ENCODE measurements at regions of chr22 and their contacts with region 1.

Region 1: DNA sequence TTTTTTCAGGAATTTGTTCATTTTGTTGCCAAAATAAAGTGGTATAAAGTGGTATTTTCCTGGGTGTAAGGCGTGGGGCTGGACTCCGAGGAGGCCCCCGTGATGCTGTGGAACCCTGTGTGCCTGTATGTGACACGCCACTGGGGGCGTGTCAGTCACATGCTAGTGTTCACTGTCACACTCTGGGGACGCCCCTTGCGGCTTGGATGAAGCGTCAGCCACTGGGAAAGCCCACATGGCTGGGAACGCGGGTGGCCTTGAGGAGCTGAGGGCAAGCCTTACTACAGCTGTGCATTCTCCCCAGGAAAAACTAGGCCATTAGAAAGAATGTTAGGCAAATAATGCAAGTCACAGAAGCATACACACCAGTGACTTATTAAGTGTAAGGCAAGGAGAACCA is 77.0 kb upstream of the SLC25A18 start:
- DNase-seq: peak in 6 of 10 donors; percentile 17 to 66 (median 42)
- H3K4me3 ChIP-seq: no peak overlapping the region
- H3K27ac ChIP-seq: peak overlapping the region in 14 of 59 donors; percentile 0 to 69 (median 50)
- H3K27me3 ChIP-seq: no peaks in the 10 kb centered on the region
- CTCF ChIP-seq: peak in 18 of 56 donors; percentile 8 to 56 (median 28)

Region 2: GRCh38 chr22:17422736-17423343 is 63.5 kb before region 1 on chr22:
- intact Hi-C with region 1: loop called in 1 of 2 experiments (anchors 5 kb)
- DNase-seq: no peak
- H3K4me3 ChIP-seq: no peak overlapping the region
- H3K27ac ChIP-seq: peak overlapping the region in 1 of 59 donors; percentile 60
- H3K27me3 ChIP-seq: no peaks in the 10 kb centered on the region
- CTCF ChIP-seq: no peak